Panc1 (cell line): ENCODE measurements at regions of chr1 and their contacts with region 1.

Region 1: DNA sequence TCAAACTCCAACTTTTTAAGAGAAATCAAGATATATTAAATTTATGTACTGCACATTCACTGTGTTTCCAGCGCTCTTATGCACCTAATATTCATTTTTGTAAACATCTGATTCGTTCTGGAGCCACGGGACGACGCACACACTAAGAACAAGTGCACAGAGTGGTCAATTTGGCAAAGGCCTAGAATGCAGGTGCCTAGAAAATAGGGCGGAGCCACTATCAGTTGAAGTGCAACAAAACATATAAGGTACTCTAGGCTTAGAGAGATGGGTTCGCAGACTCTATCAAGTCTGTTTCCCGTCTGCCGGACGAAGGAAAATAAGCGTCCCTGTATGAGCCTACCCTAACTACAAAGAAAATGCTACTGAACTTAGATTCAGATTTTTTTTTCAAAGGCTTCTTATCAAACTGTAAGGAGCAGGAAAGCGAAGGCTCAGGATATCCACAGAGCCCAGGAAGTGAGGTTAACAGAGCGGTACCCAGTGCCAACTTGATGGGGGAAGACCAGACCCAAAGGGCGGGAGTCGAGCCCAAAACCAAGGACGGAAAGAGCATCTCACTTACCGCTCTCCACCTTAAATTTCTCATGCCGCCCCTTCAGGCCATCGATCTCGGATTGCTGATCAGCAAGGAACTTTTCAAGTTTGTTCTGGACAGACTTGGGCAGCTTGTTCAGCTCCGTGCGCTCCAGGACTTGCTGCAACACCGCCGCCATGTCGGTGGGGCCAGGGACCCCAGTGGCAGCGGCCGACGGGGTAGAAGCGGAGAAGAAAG is 553 bp downstream of the TPR start:
- DNase-seq: no peak
- ATAC-seq: peak; percentile 38
- H3K4me3 ChIP-seq: peak overlapping the region; percentile 93 to 98
- H3K27ac ChIP-seq: peak overlapping the region; percentile 98
- H3K4me1 ChIP-seq: peaks cover 13% of the 10 kb centered on the region
- H3K27me3 ChIP-seq: no peaks in the 10 kb centered on the region
- CTCF ChIP-seq: no peak

Region 2: DNA sequence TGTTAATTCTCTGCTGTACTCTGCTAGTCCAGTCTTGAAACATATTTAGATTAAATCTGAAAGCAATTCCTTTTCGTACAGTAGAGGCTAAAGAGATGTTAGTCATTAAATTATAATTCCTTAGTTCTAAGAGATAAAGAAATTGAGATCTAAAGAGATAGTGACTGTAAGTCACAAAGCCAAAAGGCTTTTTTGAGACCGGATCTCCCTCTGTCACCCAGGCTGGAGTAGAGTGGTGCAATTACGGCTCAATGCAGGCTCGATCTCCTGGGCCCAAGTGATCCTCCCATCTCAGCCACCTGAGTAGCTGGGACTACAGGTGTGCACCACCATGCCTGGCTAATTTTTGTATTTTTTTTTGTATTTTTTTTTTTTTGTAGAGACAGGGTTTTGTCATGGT is 64.2 kb before region 1 on chr1:
- CTCF ChIA-PET with region 1: no interaction called
- POLR2A ChIA-PET with region 1: no interaction called
- in situ Hi-C with region 1: no loop called
- intact Hi-C with region 1: no loop called
- DNase-seq: no peak
- ATAC-seq: no peak
- H3K4me3 ChIP-seq: no peak overlapping the region
- H3K27ac ChIP-seq: no peak overlapping the region
- H3K4me1 ChIP-seq: no peaks in the 10 kb centered on the region
- H3K27me3 ChIP-seq: no peaks in the 10 kb centered on the region
- CTCF ChIP-seq: no peak

Region 3: DNA sequence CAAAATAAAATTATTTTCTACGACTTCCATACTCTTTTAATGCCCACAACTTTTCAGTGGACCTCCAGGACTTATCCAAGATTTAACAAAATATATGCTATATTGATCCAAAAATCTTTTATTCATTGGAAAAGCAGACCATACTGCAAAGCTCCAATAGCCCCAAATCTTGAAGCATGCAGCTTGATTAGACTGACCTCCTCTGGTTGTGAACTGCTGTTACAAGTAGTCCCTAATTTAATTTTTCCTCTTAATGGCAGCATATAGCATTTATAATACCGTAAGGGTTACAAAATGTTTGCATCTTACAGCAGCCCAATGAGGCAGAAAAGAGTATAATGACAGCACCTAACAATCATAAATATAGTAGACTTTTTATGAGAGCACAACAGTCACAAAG is 49.3 kb before region 1 on chr1:
- CTCF ChIA-PET with region 1: no interaction called
- POLR2A ChIA-PET with region 1: no interaction called
- in situ Hi-C with region 1: no loop called
- intact Hi-C with region 1: loop called (anchors 5 kb)
- DNase-seq: no peak
- ATAC-seq: no peak
- H3K4me3 ChIP-seq: no peak overlapping the region
- H3K27ac ChIP-seq: no peak overlapping the region
- H3K4me1 ChIP-seq: no peaks in the 10 kb centered on the region
- H3K27me3 ChIP-seq: no peaks in the 10 kb centered on the region
- CTCF ChIP-seq: peak; percentile 46; the same call in 1 of the 2 replicates